PC-3 (cell line): ENCODE measurements at regions of chr4 and their contacts with region 1.

Region 1: DNA sequence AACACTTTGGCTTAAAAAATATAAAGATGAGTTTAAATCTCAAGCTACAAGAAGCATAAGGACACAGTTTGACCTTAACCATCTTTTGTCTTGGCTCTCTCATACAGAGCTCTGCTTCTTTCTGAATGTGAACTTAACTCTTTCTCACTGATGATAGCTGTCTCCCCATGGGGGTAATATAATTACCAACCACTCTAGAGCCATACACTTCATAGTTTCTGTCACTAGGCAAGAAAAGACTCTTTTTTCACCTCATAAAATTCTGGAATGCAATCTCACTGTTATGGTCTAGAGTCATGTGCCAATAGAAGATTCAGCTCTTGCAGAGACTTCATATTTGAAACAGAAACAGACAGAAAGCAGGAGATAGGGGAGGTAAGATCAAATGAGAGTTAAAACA is 481.7 kb upstream of the AGA start:
- DNase-seq: no peak
- ATAC-seq: no peak
- H3K4me3 ChIP-seq: no peak overlapping the region
- H3K27ac ChIP-seq: no peak overlapping the region
- H3K4me1 ChIP-seq: no peaks in the 10 kb centered on the region
- H3K27me3 ChIP-seq: no peaks in the 10 kb centered on the region
- CTCF ChIP-seq: no peak

Region 2: GRCh38 chr4:177789610-177790009 is 134.3 kb before region 1 on chr4:
- CTCF ChIA-PET with region 1: no interaction called
- POLR2A ChIA-PET with region 1: interaction called, 10 read pairs
- intact Hi-C with region 1: no loop called
- DNase-seq: no peak
- ATAC-seq: no peak
- H3K4me3 ChIP-seq: no peak overlapping the region
- H3K27ac ChIP-seq: no peak overlapping the region
- H3K4me1 ChIP-seq: no peaks in the 10 kb centered on the region
- H3K27me3 ChIP-seq: no peaks in the 10 kb centered on the region
- CTCF ChIP-seq: no peak

Region 3: DNA sequence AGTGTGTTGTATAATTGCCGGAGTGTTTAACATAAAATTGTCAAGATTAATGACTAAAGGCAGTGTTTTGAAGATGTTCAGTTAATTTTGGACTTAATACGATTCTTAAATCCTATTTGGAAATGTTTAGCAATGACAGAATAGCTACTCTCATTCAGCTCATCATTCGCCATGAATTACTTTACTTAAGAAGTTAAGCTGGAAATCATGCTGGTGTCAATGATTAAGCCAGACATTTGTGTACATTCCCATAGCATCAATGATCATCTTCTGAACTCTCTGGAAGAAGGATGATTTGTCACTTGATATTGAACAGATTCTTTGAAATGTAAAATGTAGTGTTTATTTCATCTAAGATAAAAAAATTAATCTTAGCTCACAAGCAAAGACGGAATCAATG is 33.7 kb after region 1 on chr4:
- CTCF ChIA-PET with region 1: no interaction called
- POLR2A ChIA-PET with region 1: no interaction called
- intact Hi-C with region 1: no loop called
- DNase-seq: no peak
- ATAC-seq: no peak
- H3K4me3 ChIP-seq: no peak overlapping the region
- H3K27ac ChIP-seq: no peak overlapping the region
- H3K4me1 ChIP-seq: no peaks in the 10 kb centered on the region
- H3K27me3 ChIP-seq: no peaks in the 10 kb centered on the region
- CTCF ChIP-seq: no peak

Region 4: DNA sequence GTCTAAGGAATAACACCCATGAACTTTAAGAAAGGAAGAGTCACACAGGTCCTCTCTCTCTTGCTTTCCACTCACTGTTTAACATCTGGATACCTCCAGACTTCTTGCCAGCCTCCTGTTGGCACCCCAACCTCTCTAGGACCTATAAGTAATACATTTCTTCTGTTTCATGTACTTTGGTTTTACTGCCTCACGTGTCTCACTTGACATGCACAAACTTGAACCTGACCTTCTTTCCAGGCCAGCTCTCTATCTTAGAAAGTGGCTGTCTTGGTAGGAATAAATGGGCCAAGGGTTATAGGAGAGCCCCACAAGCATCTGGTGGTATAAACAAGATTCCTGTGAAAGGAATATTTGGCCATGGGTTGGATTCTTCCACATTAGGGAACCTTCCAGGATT is 133.1 kb after region 1 on chr4:
- CTCF ChIA-PET with region 1: no interaction called
- POLR2A ChIA-PET with region 1: no interaction called
- intact Hi-C with region 1: no loop called
- DNase-seq: no peak
- ATAC-seq: no peak
- H3K4me3 ChIP-seq: no peak overlapping the region
- H3K27ac ChIP-seq: no peak overlapping the region
- H3K4me1 ChIP-seq: no peaks in the 10 kb centered on the region
- H3K27me3 ChIP-seq: no peaks in the 10 kb centered on the region
- CTCF ChIP-seq: no peak